ENCODE measurements at regions of chr7 and their contacts with region 1.

Region 1: GRCh38 chr7:87886875-87887274 is 10.6 kb downstream of the DBF4 start:
- DNase-seq: peak; percentile 20
- ATAC-seq: no peak
- H3K4me3 ChIP-seq: no peak overlapping the region
- H3K27ac ChIP-seq: no peak overlapping the region
- H3K4me1 ChIP-seq: 0 out of 2 replicates have a peak, but pooled peaks cover under 1% of the 10 kb centered on the region
- H3K27me3 ChIP-seq: no peaks in the 10 kb centered on the region
- CTCF ChIP-seq: 0 out of 2 replicates have a peak, but pooled peaks have one; percentile 10
- EP300 ChIP-seq: no peak
- POLR2A ChIP-seq: no peak
- RAD21 ChIP-seq: no peak

Region 2: DNA sequence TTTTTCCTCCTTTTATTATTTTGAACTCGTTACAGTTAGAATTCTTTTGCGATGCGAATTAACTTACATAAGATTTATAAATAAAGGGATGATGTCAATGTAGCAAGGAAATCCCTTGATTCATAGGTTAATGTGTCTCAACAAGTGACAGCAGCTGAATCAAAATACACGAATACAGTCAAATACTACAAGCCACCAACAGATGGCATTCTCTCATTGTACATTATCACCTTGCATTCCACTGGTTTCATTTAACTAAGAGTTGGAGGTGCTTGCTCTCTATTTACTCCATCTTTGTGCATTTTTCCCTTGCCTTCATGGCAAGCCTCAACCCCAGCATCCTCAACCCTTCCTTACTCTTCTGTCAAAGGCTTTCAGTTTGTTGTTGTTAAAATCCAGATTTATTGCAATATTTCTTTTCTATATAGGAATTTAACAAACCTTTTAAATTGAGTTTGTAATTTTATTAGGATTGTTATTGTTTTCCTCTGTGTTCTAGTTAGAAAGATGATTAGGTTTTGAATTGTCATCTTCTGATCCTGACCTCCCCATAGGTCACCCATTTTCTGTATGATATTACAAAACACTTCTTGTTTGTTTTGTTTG is 89.0 kb before region 1 on chr7:
- CTCF ChIA-PET with region 1: interaction called, 29 read pairs
- POLR2A ChIA-PET with region 1: no interaction called
- in situ Hi-C with region 1: no loop called
- intact Hi-C with region 1: loop called (anchors 1 kb)
- DNase-seq: peak; percentile 48
- ATAC-seq: peak; percentile 80
- H3K4me3 ChIP-seq: no peak overlapping the region
- H3K27ac ChIP-seq: no peak overlapping the region
- H3K4me1 ChIP-seq: no peaks in the 10 kb centered on the region
- H3K27me3 ChIP-seq: no peaks in the 10 kb centered on the region
- CTCF ChIP-seq: peak; percentile 82
- EP300 ChIP-seq: no peak
- POLR2A ChIP-seq: no peak
- RAD21 ChIP-seq: peak; percentile 45; the same call in 1 of the 2 replicates

Measured in HepG2 (cell line).